Colonic mucosa (tissue), 4 donors: ENCODE measurements at regions of chr20 and their contacts with region 1.

Region 1: DNA sequence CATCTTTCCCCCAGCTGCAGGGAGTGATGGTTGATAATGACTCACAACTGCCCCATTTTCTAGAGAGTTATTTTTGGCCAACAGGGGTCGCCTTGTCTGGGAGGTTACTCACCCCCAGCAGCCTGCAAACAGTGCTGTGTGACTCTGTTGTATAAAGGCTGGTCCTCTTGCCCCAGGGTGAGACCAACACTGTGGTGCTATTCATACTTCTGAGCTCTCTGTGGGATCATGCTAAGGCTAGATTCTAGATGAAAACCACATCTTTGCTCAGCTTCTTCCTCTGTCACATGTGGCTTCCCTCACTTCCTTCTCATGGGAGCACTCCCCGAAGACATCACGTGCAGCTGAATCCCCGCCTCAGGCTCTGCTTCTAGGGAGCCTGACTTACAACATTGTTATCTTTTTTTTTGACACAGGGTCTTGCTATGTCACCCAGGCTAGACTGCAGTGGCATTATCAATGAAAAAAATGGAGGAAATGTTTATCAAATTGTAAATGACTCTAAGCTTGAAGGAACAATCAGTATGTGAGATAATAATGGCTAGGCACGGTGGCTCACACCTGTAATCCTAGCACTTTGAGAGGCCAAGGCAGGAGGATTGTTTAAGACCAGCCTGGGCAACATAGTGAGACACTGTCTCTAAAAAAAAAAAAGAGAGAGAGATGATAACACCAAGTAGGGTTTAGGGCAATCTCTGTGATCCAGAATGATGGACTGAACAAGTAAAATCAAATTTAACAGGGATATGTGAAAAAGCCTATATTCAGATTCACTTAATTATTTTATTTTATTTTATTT is 55.7 kb upstream of the SLC23A2 start:
- DNase-seq: peak; percentile 56
- H3K4me3 ChIP-seq: no peak overlapping the region
- H3K27ac ChIP-seq: peak overlapping the region; percentile 13
- H3K4me1 ChIP-seq: no peaks in the 10 kb centered on the region
- H3K27me3 ChIP-seq: no peaks in the 10 kb centered on the region
- CTCF ChIP-seq: peak; percentile 27

Region 2: GRCh38 chr20:4905613-4906012 is 151.4 kb before region 1 on chr20:
- intact Hi-C with region 1: no loop called
- DNase-seq: no peak
- H3K4me3 ChIP-seq: no peak overlapping the region
- H3K27ac ChIP-seq: no peak overlapping the region
- H3K4me1 ChIP-seq: no peaks in the 10 kb centered on the region
- H3K27me3 ChIP-seq: no peaks in the 10 kb centered on the region
- CTCF ChIP-seq: no peak

Region 3: DNA sequence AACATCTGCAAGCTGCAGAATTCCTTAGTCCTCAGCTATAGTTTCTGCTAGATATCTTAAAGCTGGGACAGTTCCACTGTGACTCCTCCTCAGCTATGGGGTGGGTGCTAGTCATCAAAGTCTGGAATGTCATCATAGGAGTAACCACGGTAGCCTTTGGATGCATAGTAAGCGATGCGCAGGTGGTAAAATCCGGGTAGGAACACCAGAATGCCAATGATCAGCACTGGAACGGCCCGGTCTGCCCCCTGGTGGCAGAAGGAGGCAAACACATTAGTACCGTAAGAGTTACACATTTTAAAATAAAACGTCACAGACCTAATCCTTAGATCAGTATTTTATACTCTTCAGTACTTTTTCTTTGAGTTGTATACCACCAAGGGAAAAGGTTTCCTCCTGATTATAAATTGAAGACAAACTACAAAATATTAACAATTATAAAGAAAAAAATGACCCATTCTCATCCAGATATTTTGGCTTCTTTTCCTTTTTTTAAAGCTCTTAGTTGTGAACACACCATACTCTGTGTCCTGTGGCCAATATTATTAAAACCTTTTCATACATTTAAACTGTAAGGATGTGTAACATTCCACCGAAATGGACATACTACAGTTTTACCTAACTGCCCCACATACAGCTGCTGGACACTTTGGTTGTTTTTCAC is 43.8 kb after region 1 on chr20:
- intact Hi-C with region 1: loop called (anchors 2 kb)
- DNase-seq: peak; percentile 81
- H3K4me3 ChIP-seq: no peak overlapping the region
- H3K27ac ChIP-seq: no peak overlapping the region
- H3K4me1 ChIP-seq: no peaks in the 10 kb centered on the region
- H3K27me3 ChIP-seq: no peaks in the 10 kb centered on the region
- CTCF ChIP-seq: peak; percentile 90

Region 4: GRCh38 chr20:5268449-5268848 is 211.4 kb after region 1 on chr20:
- intact Hi-C with region 1: no loop called
- DNase-seq: no peak
- H3K4me3 ChIP-seq: no peak overlapping the region
- H3K27ac ChIP-seq: no peak overlapping the region
- H3K4me1 ChIP-seq: no peaks in the 10 kb centered on the region
- H3K27me3 ChIP-seq: no peaks in the 10 kb centered on the region
- CTCF ChIP-seq: no peak